ENCODE measurements at regions of chr13 and their contacts with region 1.

Region 1: DNA sequence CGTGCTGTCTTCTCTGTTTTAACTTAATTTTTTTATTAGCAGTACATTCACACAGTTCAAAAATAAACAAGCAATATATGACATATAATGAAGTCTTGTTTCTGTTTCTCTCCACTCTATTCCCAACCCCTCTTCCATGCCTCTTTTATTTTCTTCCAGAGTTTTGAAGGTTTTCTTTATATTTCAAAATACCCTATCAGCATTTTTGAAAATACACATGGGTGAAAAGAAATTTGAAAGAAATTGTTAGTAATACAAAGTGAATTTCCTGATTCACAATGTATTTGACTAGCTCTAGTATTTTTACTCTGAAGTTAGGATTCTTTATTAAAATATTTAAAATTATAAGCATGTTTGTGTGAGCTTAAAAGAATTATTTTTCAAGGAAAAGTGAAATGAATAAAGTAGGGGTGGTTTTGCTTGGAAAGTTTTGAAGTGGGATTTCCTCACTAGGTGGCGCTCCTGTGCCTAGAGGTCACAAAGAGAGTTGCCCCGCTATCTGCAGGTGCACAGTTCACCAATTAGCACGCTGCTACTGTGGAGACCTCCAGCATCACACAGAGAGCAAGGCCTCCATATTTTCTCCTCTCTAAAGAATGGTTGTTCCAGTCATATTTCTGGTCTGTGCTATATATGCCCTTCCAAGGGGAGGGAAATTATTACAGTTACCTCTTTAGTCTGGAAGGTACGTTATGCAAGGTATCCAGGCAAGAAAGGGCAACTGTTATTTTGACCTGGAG is 37.6 kb downstream of the SOX21 start:
- DNase-seq: peak; percentile 48
- CTCF ChIP-seq: peak; percentile 59

Region 2: GRCh38 chr13:94641409-94641941 is 33.3 kb before region 1 on chr13:
- CTCF ChIA-PET with region 1: no interaction called
- POLR2A ChIA-PET with region 1: no interaction called
- DNase-seq: no peak
- CTCF ChIP-seq: no peak

Region 3: GRCh38 chr13:94660695-94661326 is 14.0 kb before region 1 on chr13:
- CTCF ChIA-PET with region 1: interaction called, 18 read pairs
- POLR2A ChIA-PET with region 1: no interaction called
- DNase-seq: no peak
- CTCF ChIP-seq: peak; percentile 26

Region 4: GRCh38 chr13:94716016-94716415 is 41.2 kb after region 1 on chr13:
- CTCF ChIA-PET with region 1: no interaction called
- POLR2A ChIA-PET with region 1: no interaction called
- DNase-seq: no peak
- CTCF ChIP-seq: no peak

Measured in GM10248 (cell line).